ENCODE measurements at regions of chr14 and their contacts with region 1.

Region 1: GRCh38 chr14:20461274-20462001 is at the start of gene PIP4P1:
- DNase-seq: peak; percentile 99
- ATAC-seq: peak; percentile 96 to 97
- total RNA-seq, gene PIP4P1: 19.5 to 23.2 TPM

Region 2: GRCh38 chr14:20343092-20343861 is 118.2 kb before region 1 on chr14 and contains the start of gene PARP2:
- intact Hi-C with region 1: loop called (anchors 10 kb)
- DNase-seq: peak; percentile 98
- ATAC-seq: peak; percentile 95 to 98
- total RNA-seq, gene PARP2: 12.5 to 13.6 TPM

Measured in left cardiac atrium (tissue), 4 donors.